H1 (cell line): ENCODE measurements at regions of chr16 and their contacts with region 1.

Region 1: DNA sequence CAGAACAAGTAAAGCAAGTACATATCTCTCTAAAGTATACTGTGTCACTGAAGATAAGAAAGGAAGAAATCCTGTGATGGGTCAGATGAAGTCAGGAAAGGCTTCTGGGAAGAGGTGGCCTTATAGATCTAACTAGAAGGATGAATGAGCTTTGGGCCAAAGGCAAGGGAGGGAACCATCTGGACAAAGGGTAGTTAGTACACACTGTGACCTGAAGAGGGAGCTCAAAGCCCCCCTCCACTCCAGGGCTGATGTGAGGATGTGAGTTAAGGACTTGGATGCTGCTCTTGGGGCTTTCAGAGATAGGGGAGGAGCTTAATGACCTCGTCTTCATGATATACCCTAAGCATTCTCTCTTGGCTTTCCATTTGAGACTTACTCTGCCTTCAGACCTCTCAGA is 185.3 kb upstream of the CACNG3 start:
- DNase-seq: peak; percentile 60 to 75
- H3K4me3 ChIP-seq: no peak overlapping the region
- H3K27ac ChIP-seq: no peak overlapping the region
- H3K4me1 ChIP-seq: peaks cover 0 to under 1% (median 0%) of the 10 kb centered on the region in 4 experiments; a peak in 1 of 7 replicates
- H3K27me3 ChIP-seq: no peaks in the 10 kb centered on the region
- CTCF ChIP-seq: peak; percentile 68 to 95 (median 83)
- EP300 ChIP-seq: no peak
- POLR2A ChIP-seq: no peak
- RAD21 ChIP-seq: peak; percentile 95 to 97

Region 2: GRCh38 chr16:24036614-24037013 is 34.2 kb before region 1 on chr16:
- CTCF ChIA-PET with region 1: interaction called, 14 read pairs
- POLR2A ChIA-PET with region 1: no interaction called
- DNase-seq: peak in 1 of 2 experiments; percentile 70
- H3K4me3 ChIP-seq: no peak overlapping the region
- H3K27ac ChIP-seq: no peak overlapping the region
- H3K4me1 ChIP-seq: no peaks in the 10 kb centered on the region; a peak in 1 of 7 replicates
- H3K27me3 ChIP-seq: no peaks in the 10 kb centered on the region
- CTCF ChIP-seq: peak; percentile 62 to 89 (median 87)
- EP300 ChIP-seq: no peak
- POLR2A ChIP-seq: no peak
- RAD21 ChIP-seq: peak; percentile 98 to 99

Region 3: GRCh38 chr16:24054741-24055491 is 15.9 kb before region 1 on chr16:
- CTCF ChIA-PET with region 1: interaction called, 34 read pairs
- POLR2A ChIA-PET with region 1: interaction called, 4 read pairs
- DNase-seq: peak in 1 of 2 experiments; percentile 56
- H3K4me3 ChIP-seq: peak overlapping the region in 1 of 4 experiments; percentile 16; a peak in 2 of 8 replicates
- H3K27ac ChIP-seq: peak overlapping the region; percentile 3; the same call in 1 of the 2 replicates
- H3K4me1 ChIP-seq: peaks cover 5 to 30% (median 12%) of the 10 kb centered on the region in 4 experiments
- H3K27me3 ChIP-seq: no peaks in the 10 kb centered on the region
- CTCF ChIP-seq: no peak
- EP300 ChIP-seq: no peak
- POLR2A ChIP-seq: no peak
- RAD21 ChIP-seq: peak in 1 of 2 experiments; percentile 9; a peak in 1 of 4 replicates

Region 4: DNA sequence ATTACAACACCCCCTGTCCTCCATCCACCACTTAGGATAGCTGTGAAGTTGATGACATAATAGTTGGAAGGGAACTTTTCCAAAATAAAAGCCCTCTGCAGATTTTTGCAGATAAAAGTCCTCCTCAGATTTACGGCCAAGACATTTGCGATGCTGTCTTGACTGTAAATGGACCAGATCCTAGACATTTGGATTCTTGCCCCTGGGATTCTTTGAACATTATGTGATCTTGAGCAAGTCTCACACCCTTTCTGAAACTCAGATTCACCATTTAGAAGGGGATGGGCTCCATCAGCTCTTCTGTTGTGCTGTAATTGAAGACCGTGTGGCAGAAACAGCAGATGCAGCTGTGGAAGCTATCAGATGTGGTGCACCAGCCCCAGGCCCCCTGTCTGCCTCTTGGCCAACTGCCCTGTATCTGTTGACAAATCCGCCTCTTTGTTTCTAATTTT is 31.4 kb after region 1 on chr16:
- CTCF ChIA-PET with region 1: interaction called, 14 read pairs
- POLR2A ChIA-PET with region 1: no interaction called
- DNase-seq: no peak
- H3K4me3 ChIP-seq: no peak overlapping the region
- H3K27ac ChIP-seq: no peak overlapping the region
- H3K4me1 ChIP-seq: peaks cover 3 to 17% (median 5%) of the 10 kb centered on the region in 4 experiments; a peak in 6 of 7 replicates
- H3K27me3 ChIP-seq: no peaks in the 10 kb centered on the region; a peak in 1 of 7 replicates
- CTCF ChIP-seq: peak in 2 of 3 experiments; percentile 10 to 17; a peak in 2 of 4 replicates
- EP300 ChIP-seq: no peak
- POLR2A ChIP-seq: no peak
- RAD21 ChIP-seq: no peak; a peak in 1 of 4 replicates

Region 5: GRCh38 chr16:24163935-24164334 is 93.1 kb after region 1 on chr16:
- CTCF ChIA-PET with region 1: interaction called, 12 read pairs
- POLR2A ChIA-PET with region 1: no interaction called
- DNase-seq: no peak
- H3K4me3 ChIP-seq: no peak overlapping the region; a peak in 1 of 8 replicates
- H3K27ac ChIP-seq: no peak overlapping the region; the same call in 1 of the 2 replicates
- H3K4me1 ChIP-seq: peaks cover 3 to 10% (median 6%) of the 10 kb centered on the region in 4 experiments; a peak in 4 of 7 replicates
- H3K27me3 ChIP-seq: no peaks in the 10 kb centered on the region
- CTCF ChIP-seq: no peak
- EP300 ChIP-seq: no peak
- POLR2A ChIP-seq: no peak
- RAD21 ChIP-seq: no peak

Region 6: DNA sequence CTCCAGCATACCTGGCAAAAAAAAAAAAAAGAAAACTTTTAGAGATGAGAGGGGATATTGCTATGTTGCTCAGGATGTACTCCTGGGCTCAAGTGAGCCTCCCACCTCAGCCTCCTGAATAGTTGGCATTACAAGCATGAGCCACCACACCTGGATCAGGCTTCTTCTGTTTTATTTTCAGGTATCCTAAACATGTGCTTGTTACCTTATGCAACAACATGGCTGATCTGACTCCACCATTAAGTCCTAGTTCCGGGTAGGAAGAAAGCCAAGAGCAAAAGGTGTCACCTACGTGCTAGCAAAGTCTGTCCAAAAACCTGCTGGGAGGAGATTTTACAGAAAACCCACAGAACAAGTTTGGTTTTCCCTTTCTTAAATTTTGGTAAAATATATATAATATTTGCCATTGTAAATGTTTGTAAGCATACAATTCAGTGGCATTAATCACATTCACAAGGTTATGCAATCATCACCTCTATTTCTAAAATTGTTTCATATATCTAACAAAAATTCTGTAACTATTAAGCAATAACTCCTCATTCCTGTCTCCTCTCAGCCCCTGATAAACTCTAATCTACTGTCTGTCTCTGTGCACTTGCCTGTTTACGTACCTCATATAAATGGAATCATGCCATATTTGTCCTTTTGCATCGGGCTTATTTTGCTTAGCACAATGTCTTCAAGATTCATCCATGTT is 176.2 kb after region 1 on chr16:
- CTCF ChIA-PET with region 1: interaction called, 124 read pairs
- POLR2A ChIA-PET with region 1: no interaction called
- DNase-seq: no peak
- H3K4me3 ChIP-seq: no peak overlapping the region
- H3K27ac ChIP-seq: no peak overlapping the region
- H3K4me1 ChIP-seq: no peaks in the 10 kb centered on the region
- H3K27me3 ChIP-seq: no peaks in the 10 kb centered on the region
- CTCF ChIP-seq: no peak
- EP300 ChIP-seq: no peak
- POLR2A ChIP-seq: no peak
- RAD21 ChIP-seq: no peak

Region 7: DNA sequence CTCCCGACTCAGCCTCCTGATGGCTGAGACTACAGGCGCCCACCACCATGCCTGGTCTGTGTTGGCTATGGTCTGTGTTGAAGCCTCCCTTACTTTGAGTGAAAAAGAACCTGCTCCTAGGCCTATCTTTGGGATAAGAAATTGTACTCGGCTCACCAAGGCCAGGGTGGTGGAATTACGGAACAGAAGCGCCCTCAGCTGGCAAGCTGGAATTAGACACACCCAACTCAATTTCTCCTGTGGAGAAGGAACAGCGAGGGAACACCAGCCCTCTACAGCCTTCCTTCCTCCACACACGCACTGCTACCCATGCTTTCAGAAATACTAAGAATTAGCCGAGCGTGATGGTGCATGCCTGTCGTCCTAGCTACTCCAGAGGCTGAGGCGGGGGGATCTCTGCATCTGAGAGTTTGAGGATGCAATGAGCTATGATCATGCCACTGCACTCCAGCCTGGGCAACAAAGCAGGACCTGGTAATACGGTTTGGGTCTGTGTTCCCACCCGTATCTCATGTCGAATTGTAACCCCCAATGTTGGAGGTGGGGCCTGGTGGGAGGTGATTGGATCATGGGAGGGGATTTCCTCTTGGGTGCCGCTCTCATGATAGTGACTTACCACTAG is 428.5 kb after region 1 on chr16:
- CTCF ChIA-PET with region 1: interaction called, 19 read pairs
- POLR2A ChIA-PET with region 1: no interaction called
- DNase-seq: peak; percentile 44 to 77
- H3K4me3 ChIP-seq: no peak overlapping the region
- H3K27ac ChIP-seq: no peak overlapping the region
- H3K4me1 ChIP-seq: peaks cover 0 to 5% (median 4%) of the 10 kb centered on the region in 4 experiments; a peak in 6 of 7 replicates
- H3K27me3 ChIP-seq: no peaks in the 10 kb centered on the region; a peak in 1 of 7 replicates
- CTCF ChIP-seq: peak; percentile 69 to 92 (median 92)
- EP300 ChIP-seq: no peak
- POLR2A ChIP-seq: no peak
- RAD21 ChIP-seq: peak; percentile 98 to 99